Sigmoid colon (tissue), 7 donors: ENCODE measurements at regions of chrX and their contacts with region 1.

Region 1: GRCh38 chrX:21940356-21940829 is at the start of gene SMS:
- DNase-seq: peak; percentile 90
- H3K4me3 ChIP-seq: peak within 1 kb of the TSS; percentile 40 to 65 (median 64)
- H3K27ac ChIP-seq: peak within 1 kb of the TSS; percentile 82 to 85 (median 83)
- H3K4me1 ChIP-seq: peaks cover 0 to 10% (median 2%) of the 10 kb centered on the region in 4 donors
- H3K27me3 ChIP-seq: no peaks in the 10 kb centered on the region
- CTCF ChIP-seq: no peak
- EP300 ChIP-seq: no peak
- POLR2A ChIP-seq: peak in 1 of 2 donors; percentile 21
- total RNA-seq, gene SMS: 62.6 to 84.5 (median 70.0) TPM

Region 2: GRCh38 chrX:21745756-21746155 is 194.6 kb before region 1 on chrX:
- intact Hi-C with region 1: loop called (anchors 10 kb)
- DNase-seq: no peak
- H3K4me3 ChIP-seq: no peak overlapping the region
- H3K27ac ChIP-seq: no peak overlapping the region
- H3K4me1 ChIP-seq: peaks cover 0 to 23% (median 0%) of the 10 kb centered on the region in 4 donors
- H3K27me3 ChIP-seq: no peaks in the 10 kb centered on the region
- CTCF ChIP-seq: peak in 2 of 4 experiments; percentile 24 to 30
- EP300 ChIP-seq: no peak
- POLR2A ChIP-seq: no peak

Region 3: GRCh38 chrX:21847342-21847741 is 93.1 kb before region 1 on chrX:
- intact Hi-C with region 1: no loop called
- DNase-seq: no peak
- H3K4me3 ChIP-seq: no peak overlapping the region
- H3K27ac ChIP-seq: no peak overlapping the region
- H3K4me1 ChIP-seq: no peaks in the 10 kb centered on the region
- H3K27me3 ChIP-seq: no peaks in the 10 kb centered on the region
- CTCF ChIP-seq: no peak
- EP300 ChIP-seq: no peak
- POLR2A ChIP-seq: no peak